ENCODE measurements at regions of chr3 and their contacts with region 1.

Region 1: DNA sequence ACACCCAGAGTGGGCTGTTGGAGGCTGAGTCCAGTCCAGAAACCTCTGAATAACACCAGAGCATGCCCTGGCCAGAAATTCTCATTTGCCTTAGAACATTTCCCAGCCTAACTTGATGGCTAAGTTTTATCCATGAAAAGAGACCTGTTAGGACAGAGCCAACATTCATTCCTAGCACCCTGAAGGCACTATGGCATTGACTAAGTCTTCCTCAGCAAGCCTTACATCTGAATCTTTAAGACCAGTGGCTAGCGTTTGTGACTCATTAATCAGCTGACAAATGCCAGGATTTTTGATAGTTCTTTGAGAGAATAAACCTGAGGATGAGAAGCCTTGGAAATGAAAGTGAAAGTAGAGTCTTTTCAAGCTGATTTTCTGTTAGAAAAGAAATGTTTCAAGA is 1087.1 kb upstream of the ALCAM start:
- DNase-seq: no peak
- ATAC-seq: no peak
- H3K4me3 ChIP-seq: no peak overlapping the region
- H3K27ac ChIP-seq: no peak overlapping the region
- H3K4me1 ChIP-seq: no peaks in the 10 kb centered on the region
- H3K27me3 ChIP-seq: no peaks in the 10 kb centered on the region
- CTCF ChIP-seq: no peak
- EP300 ChIP-seq: no peak
- POLR2A ChIP-seq: no peak
- RAD21 ChIP-seq: no peak

Region 2: GRCh38 chr3:104521606-104522336 is 242.2 kb after region 1 on chr3:
- CTCF ChIA-PET with region 1: no interaction called
- POLR2A ChIA-PET with region 1: no interaction called
- RAD21 ChIA-PET with region 1: no interaction called
- SMC1A ChIA-PET with region 1: interaction called, 3 read pairs
- in situ Hi-C with region 1: no loop called
- intact Hi-C with region 1: loop called (anchors 5 kb)
- DNase-seq: peak; percentile 68
- ATAC-seq: peak; percentile 66
- H3K4me3 ChIP-seq: peak overlapping the region; percentile 71
- H3K27ac ChIP-seq: peak overlapping the region; percentile 91
- H3K4me1 ChIP-seq: peaks cover 23% of the 10 kb centered on the region
- H3K27me3 ChIP-seq: no peaks in the 10 kb centered on the region
- CTCF ChIP-seq: no peak
- EP300 ChIP-seq: peak in 1 of 2 experiments; percentile 78; a peak in 2 of 4 replicates
- POLR2A ChIP-seq: no peak
- RAD21 ChIP-seq: 0 out of 2 replicates have a peak, but pooled peaks have one; percentile 1

Region 3: GRCh38 chr3:104781112-104781511 is 501.5 kb after region 1 on chr3:
- CTCF ChIA-PET with region 1: no interaction called
- POLR2A ChIA-PET with region 1: no interaction called
- RAD21 ChIA-PET with region 1: no interaction called
- SMC1A ChIA-PET with region 1: no interaction called
- in situ Hi-C with region 1: no loop called
- intact Hi-C with region 1: loop called (anchors 5 kb)
- DNase-seq: no peak
- ATAC-seq: no peak
- H3K4me3 ChIP-seq: no peak overlapping the region
- H3K27ac ChIP-seq: no peak overlapping the region
- H3K4me1 ChIP-seq: no peaks in the 10 kb centered on the region
- H3K27me3 ChIP-seq: no peaks in the 10 kb centered on the region
- CTCF ChIP-seq: no peak
- EP300 ChIP-seq: no peak
- POLR2A ChIP-seq: no peak
- RAD21 ChIP-seq: no peak